ENCODE measurements at regions of chr9 and their contacts with region 1.

Region 1: DNA sequence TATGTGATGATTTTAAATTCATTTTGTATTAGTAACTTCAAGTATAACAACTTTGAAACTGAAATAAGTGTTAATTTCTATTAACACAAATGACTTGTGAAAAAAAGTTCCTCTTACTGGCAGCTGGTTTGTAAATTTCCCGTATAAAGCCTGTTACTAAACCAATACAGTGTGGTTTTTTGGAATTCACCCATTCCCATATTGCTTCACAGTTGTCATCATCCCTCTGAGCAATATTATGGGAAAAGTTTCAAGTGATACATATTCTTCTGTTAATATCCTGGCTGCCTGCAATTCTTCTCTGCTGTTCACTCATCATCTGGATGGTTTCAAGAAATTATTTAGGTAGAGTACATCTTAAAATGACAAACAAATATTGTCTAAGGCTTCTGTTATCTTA is 1185.1 kb upstream of the C9orf72 start:
- DNase-seq: no peak
- ATAC-seq: no peak
- H3K4me3 ChIP-seq: no peak overlapping the region
- H3K27ac ChIP-seq: no peak overlapping the region
- H3K4me1 ChIP-seq: no peaks in the 10 kb centered on the region
- H3K27me3 ChIP-seq: no peaks in the 10 kb centered on the region
- CTCF ChIP-seq: no peak
- POLR2A ChIP-seq: no peak
- RAD21 ChIP-seq: no peak

Region 2: DNA sequence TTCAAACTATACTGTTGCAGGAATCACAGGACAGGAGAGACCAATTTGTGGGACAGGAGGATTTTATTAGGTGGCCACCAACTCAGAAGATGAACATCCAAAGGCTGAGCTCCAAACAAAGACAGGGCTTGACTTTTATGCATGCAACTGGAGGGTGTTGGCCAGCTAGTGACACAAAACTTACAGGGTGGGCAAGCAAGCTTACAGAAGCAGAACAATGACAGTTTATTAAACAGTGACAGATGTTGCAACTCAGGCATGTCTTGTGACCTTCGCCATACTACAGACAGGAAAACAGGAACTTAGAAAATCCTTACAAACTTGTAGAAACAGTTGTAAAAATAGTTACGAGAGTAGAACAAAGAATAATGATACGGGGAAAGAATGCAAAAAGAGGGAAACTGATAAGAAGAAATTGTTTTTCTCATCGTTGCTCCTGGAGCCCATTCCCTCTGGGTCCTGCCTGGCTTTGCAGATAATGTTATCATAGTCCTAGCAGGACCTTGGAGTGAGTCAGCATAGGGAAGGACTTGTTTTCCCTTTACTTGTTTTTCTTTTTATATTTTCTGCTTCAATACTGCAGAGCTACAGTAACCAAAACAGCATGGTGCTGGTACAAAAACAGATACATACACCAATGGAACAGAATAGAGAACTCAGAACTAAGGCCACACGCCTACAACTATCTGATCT is 1543.1 kb after region 1 on chr9:
- CTCF ChIA-PET with region 1: no interaction called
- POLR2A ChIA-PET with region 1: no interaction called
- dilution Hi-C with region 1: no loop called
- in situ Hi-C with region 1: no loop called
- intact Hi-C with region 1: loop called (anchors 10 kb)
- DNase-seq: no peak
- ATAC-seq: no peak
- H3K4me3 ChIP-seq: no peak overlapping the region
- H3K27ac ChIP-seq: no peak overlapping the region
- H3K4me1 ChIP-seq: no peaks in the 10 kb centered on the region
- H3K27me3 ChIP-seq: no peaks in the 10 kb centered on the region
- CTCF ChIP-seq: no peak
- POLR2A ChIP-seq: no peak
- RAD21 ChIP-seq: no peak

Measured in IMR-90 (cell line).